Transverse colon (tissue), 4 donors: ENCODE measurements at regions of chr1 and their contacts with region 1.

Region 1: DNA sequence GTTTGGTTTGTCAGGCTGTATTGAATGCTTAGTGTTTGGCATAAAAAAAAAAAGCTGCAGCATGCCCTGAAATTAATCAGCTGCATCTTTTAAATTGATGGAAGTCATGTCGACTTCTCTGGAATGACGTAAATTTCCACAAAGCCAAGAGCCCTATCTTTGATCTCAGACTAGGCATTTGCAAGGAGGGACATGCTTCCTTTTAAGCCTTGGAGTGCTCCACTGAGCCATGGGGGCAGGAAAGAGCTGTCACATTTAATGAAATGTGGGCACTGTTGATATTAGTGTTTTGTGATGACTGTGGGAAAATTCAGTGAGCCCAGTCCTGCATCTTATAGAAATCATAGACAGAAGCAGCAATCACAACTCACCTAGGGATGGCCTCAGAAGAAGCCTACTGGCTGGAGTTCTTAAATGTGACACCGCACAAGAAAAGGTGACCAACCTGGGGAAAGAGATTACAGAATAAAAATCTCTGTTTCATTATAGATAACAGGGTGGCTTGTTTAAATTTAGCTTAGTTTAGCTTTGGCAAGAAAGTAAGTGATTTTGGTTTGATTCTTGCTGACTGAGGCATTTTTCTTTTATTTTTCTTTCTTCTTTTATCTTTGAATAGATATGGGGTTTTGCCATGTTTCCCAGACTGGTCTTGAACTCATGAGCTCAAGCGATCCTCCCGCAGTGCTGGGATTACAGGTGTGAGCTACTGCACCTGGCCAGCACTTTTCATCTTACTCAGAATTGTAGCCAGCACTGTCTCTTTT is 188.2 kb downstream of the HHAT start:
- DNase-seq: no peak
- H3K4me3 ChIP-seq: no peak overlapping the region
- H3K27ac ChIP-seq: no peak overlapping the region
- H3K4me1 ChIP-seq: no peaks in the 10 kb centered on the region
- H3K27me3 ChIP-seq: no peaks in the 10 kb centered on the region
- CTCF ChIP-seq: no peak
- EP300 ChIP-seq: no peak
- POLR2A ChIP-seq: no peak

Region 2: DNA sequence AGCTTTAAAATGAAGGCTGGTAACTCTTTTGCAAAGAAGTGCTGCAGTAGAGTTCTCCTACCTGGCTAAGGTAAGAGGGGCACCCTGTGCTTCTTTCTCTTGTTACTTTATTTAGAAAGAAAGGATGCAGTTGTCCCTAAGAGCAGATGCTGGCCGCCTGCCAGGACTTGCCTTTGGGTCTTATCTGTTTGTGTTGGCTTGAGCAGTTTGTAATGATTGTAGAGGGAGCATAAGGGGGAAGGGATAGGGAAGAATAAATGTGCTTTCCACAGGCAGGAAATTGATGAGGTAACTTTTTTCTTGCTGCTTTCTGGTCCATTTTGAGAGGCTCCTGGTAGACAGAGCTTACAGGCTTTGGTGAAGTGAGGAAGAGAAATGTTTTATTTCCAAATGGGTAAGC is 41.4 kb after region 1 on chr1:
- in situ Hi-C with region 1: no loop called
- intact Hi-C with region 1: loop called (anchors 1 kb)
- DNase-seq: no peak
- H3K4me3 ChIP-seq: no peak overlapping the region
- H3K27ac ChIP-seq: no peak overlapping the region
- H3K4me1 ChIP-seq: no peaks in the 10 kb centered on the region
- H3K27me3 ChIP-seq: no peaks in the 10 kb centered on the region
- CTCF ChIP-seq: no peak
- EP300 ChIP-seq: no peak
- POLR2A ChIP-seq: no peak